PC-3 (cell line): ENCODE measurements at regions of chr1 and their contacts with region 1.

Region 1: GRCh38 chr1:226308723-226309315 is at the start of gene LIN9:
- DNase-seq: peak; percentile 99
- ATAC-seq: peak; percentile 82
- H3K4me3 ChIP-seq: peak within 1 kb of the TSS; percentile 98
- H3K27ac ChIP-seq: peak within 1 kb of the TSS; percentile 75
- H3K4me1 ChIP-seq: peaks cover 22% of the 10 kb centered on the region
- H3K27me3 ChIP-seq: no peaks in the 10 kb centered on the region
- CTCF ChIP-seq: no peak; the same call in 1 of the 2 replicates
- total RNA-seq, gene LIN9: 21.9 and 25.3 TPM in 2 replicates

Region 2: GRCh38 chr1:226186124-226187018 is 122.4 kb before region 1 on chr1 and contains the start of gene ACBD3:
- CTCF ChIA-PET with region 1: no interaction called
- POLR2A ChIA-PET with region 1: no interaction called
- intact Hi-C with region 1: loop called (anchors 5 kb)
- DNase-seq: peak; percentile 95
- ATAC-seq: peak; percentile 94
- H3K4me3 ChIP-seq: peak within 1 kb of the TSS; percentile 80
- H3K27ac ChIP-seq: peak within 1 kb of the TSS; percentile 42
- H3K4me1 ChIP-seq: peaks cover 27% of the 10 kb centered on the region
- H3K27me3 ChIP-seq: no peaks in the 10 kb centered on the region
- CTCF ChIP-seq: 0 out of 2 replicates have a peak, but pooled peaks have one; percentile 12
- total RNA-seq, gene ACBD3: 62.2 and 62.9 TPM in 2 replicates

Region 3: GRCh38 chr1:226332947-226333346 is 24.1 kb after region 1 on chr1:
- CTCF ChIA-PET with region 1: interaction called, 15 read pairs
- POLR2A ChIA-PET with region 1: interaction called, 4 read pairs
- intact Hi-C with region 1: no loop called
- DNase-seq: no peak
- ATAC-seq: peak; percentile 36
- H3K4me3 ChIP-seq: peak overlapping the region; percentile 61
- H3K27ac ChIP-seq: no peak overlapping the region
- H3K4me1 ChIP-seq: peaks cover 8% of the 10 kb centered on the region
- H3K27me3 ChIP-seq: no peaks in the 10 kb centered on the region
- CTCF ChIP-seq: no peak

Region 4: GRCh38 chr1:226407497-226408284 is 98.9 kb after region 1 on chr1 and contains the start of gene PARP1:
- CTCF ChIA-PET with region 1: no interaction called
- POLR2A ChIA-PET with region 1: interaction called, 5 read pairs
- intact Hi-C with region 1: loop called (anchors 5 kb)
- DNase-seq: peak; percentile 99
- ATAC-seq: peak; percentile 85
- H3K4me3 ChIP-seq: peak within 1 kb of the TSS; percentile 79
- H3K27ac ChIP-seq: peak within 1 kb of the TSS; percentile 56
- H3K4me1 ChIP-seq: peaks cover 35% of the 10 kb centered on the region
- H3K27me3 ChIP-seq: no peaks in the 10 kb centered on the region
- CTCF ChIP-seq: peak; percentile 82
- total RNA-seq, gene PARP1: 536 and 538 TPM in 2 replicates

Region 5: DNA sequence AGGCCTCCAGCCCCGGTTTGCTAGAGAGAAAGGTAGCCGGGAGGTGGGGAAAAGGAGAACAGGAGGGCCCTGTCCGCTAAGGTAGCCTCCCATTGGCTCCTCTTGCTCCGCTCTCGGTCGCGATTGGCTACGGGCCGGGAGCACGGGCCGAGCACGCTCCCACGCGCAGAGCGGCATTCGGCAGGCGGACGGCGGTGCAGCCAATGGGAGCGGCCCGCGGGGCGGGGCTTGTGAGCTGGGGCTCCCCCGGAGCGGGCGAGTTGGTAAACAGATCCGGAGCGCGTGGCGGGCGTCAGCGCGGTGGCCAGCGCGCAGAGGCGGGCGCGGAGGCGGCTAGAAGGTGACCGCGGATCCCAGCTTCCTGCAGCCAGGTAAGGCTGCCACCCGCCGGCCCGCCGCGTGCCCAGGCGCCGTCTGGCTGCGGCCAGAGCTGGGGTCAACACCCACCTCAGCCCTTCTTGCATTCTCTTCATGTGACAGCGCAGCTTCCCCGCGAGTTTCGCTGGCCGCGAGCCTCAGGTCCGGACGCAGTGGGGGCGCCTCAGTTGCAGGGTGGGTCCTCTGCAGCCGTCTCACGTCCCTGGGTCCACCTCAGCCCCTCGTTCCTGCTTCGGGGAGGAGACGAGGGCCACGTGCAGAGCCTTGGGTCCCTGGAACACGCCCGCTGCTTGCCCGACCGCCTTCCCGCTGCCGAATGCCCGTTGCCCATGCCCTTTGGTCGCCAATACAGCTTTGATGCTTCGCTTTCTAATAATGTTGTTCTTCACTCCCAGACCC is 631.4 kb after region 1 on chr1 and contains the start of gene COQ8A:
- CTCF ChIA-PET with region 1: no interaction called
- POLR2A ChIA-PET with region 1: interaction called, 10 read pairs
- intact Hi-C with region 1: no loop called
- DNase-seq: peak; percentile 100
- ATAC-seq: peak; percentile 94
- H3K4me3 ChIP-seq: peak within 1 kb of the TSS; percentile 79
- H3K27ac ChIP-seq: peak within 1 kb of the TSS; percentile 87
- H3K4me1 ChIP-seq: peaks cover 27% of the 10 kb centered on the region
- H3K27me3 ChIP-seq: no peaks in the 10 kb centered on the region
- CTCF ChIP-seq: no peak
- total RNA-seq, gene COQ8A: 67.0 and 73.3 TPM in 2 replicates